Right cardiac atrium (tissue), 5 donors: ENCODE measurements at regions of chr1 and their contacts with region 1.

Region 1: GRCh38 chr1:14733048-14733778 is 134.7 kb downstream of the KAZN start:
- DNase-seq: no peak
- ATAC-seq: no peak
- H3K4me3 ChIP-seq: no peak overlapping the region
- H3K27ac ChIP-seq: no peak overlapping the region
- H3K4me1 ChIP-seq: no peaks in the 10 kb centered on the region
- H3K27me3 ChIP-seq: no peaks in the 10 kb centered on the region

Region 2: GRCh38 chr1:14108356-14109275 is 624.6 kb before region 1 on chr1:
- intact Hi-C with region 1: loop called in 2 of 4 experiments (anchors 5 kb)
- DNase-seq: no peak
- ATAC-seq: peak; percentile 55 to 68
- H3K4me3 ChIP-seq: no peak overlapping the region
- H3K27ac ChIP-seq: no peak overlapping the region
- H3K4me1 ChIP-seq: peaks cover 2% of the 10 kb centered on the region
- H3K27me3 ChIP-seq: no peaks in the 10 kb centered on the region

Region 3: DNA sequence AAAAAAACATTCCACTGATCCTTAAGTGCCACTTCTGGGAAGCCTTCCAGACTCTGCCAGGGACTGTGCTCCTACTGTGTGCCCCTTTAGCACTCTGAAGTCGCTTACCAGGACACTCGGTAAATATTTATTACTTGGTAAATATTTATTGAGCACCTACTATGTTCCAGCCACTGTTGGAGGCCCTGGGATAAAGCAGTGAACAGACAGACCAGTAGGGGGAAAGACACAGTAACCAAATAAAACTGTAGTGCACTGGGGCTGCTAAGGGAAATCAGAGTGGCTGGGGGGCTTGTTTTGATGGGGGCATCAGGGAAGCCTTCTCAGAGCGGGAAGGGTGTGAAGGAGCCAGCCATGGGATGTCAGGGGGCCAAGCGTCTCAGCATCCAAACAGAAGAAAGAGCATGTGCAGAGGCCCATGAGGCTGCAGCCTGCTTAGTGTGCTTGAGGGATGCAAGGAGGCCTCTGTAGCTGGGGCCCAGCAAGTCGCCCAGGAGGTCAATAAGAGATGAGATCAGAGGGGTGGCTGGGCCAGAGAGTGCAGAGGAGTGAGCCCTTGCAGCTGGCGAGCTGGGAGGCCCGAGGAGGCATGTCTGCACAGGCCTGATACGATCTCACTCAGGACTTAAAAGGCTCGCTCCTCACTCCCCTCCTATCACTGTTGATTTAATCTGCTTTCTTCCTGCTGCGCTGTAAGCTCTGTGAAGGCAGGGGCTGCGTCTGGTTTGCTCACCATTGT is 106.2 kb before region 1 on chr1:
- intact Hi-C with region 1: no loop called
- DNase-seq: peak; percentile 50 to 71 (median 54)
- ATAC-seq: peak; percentile 71 to 77
- H3K4me3 ChIP-seq: no peak overlapping the region
- H3K27ac ChIP-seq: no peak overlapping the region
- H3K4me1 ChIP-seq: no peaks in the 10 kb centered on the region
- H3K27me3 ChIP-seq: no peaks in the 10 kb centered on the region

Region 4: DNA sequence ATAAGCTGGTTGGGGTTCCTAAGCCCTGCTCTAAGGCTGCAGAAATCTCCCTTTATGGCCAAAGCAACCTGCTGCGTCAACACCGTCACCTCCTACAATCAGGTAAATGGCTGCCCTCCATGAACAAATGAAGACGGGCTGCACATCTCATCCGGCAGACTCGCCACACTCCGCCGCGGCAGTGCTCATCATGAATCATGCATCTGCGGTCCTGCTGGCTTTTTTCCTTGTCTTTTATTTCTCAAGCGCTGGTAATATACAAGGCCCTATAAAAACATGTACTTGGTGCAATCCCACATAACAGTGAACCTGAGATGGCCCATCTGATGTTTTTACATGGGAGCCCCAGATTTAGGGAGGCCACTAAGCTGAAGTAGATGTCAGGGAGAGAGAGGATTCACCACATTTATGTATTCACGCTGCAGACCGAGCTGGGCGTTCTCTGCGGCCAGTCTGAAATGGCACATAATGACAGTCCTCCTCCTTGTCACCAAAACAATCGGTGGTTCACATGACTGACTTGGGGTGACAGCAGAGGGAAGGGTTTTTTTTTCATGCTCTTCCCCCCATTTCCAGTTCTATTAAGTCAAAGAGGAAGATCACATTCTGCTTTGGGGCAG is 43.1 kb before region 1 on chr1:
- intact Hi-C with region 1: no loop called
- DNase-seq: no peak
- ATAC-seq: no peak
- H3K4me3 ChIP-seq: no peak overlapping the region
- H3K27ac ChIP-seq: no peak overlapping the region
- H3K4me1 ChIP-seq: no peaks in the 10 kb centered on the region
- H3K27me3 ChIP-seq: peaks cover 2% of the 10 kb centered on the region